ENCODE measurements at regions of chr12 and their contacts with region 1.

Region 1: GRCh38 chr12:6195665-6196535 is 4.3 kb upstream of the CD9 start:
- DNase-seq: peak; percentile 95
- ATAC-seq: peak; percentile 60
- H3K4me3 Mint-ChIP-seq: no peak overlapping the region
- H3K27ac Mint-ChIP-seq: peak overlapping the region; percentile 79
- H3K4me1 Mint-ChIP-seq: peaks cover 63% of the 10 kb centered on the region
- H3K27me3 Mint-ChIP-seq: peaks cover 7% of the 10 kb centered on the region; the same call in 1 of the 2 replicates
- CTCF ChIP-seq: peak; percentile 99

Region 2: GRCh38 chr12:6067152-6067916 is 128.6 kb before region 1 on chr12:
- CTCF ChIA-PET with region 1: interaction called, 27 read pairs
- POLR2A ChIA-PET with region 1: no interaction called
- DNase-seq: peak; percentile 75
- ATAC-seq: peak; percentile 60
- H3K4me3 Mint-ChIP-seq: no peak overlapping the region
- H3K27ac Mint-ChIP-seq: no peak overlapping the region; the same call in 1 of the 2 replicates
- H3K4me1 Mint-ChIP-seq: peaks cover 18% of the 10 kb centered on the region
- H3K27me3 Mint-ChIP-seq: no peaks in the 10 kb centered on the region
- CTCF ChIP-seq: no peak

Region 3: GRCh38 chr12:6222078-6222654 is 26.3 kb after region 1 on chr12:
- CTCF ChIA-PET with region 1: interaction called, 36 read pairs
- POLR2A ChIA-PET with region 1: interaction called, 3 read pairs
- DNase-seq: no peak
- ATAC-seq: no peak
- H3K4me3 Mint-ChIP-seq: no peak overlapping the region
- H3K27ac Mint-ChIP-seq: peak overlapping the region; percentile 78
- H3K4me1 Mint-ChIP-seq: peaks cover 58% of the 10 kb centered on the region
- H3K27me3 Mint-ChIP-seq: no peaks in the 10 kb centered on the region
- CTCF ChIP-seq: no peak

Region 4: GRCh38 chr12:6241495-6241894 is 45.6 kb after region 1 on chr12:
- CTCF ChIA-PET with region 1: interaction called, 10 read pairs
- POLR2A ChIA-PET with region 1: no interaction called
- DNase-seq: no peak
- ATAC-seq: no peak
- H3K4me3 Mint-ChIP-seq: no peak overlapping the region
- H3K27ac Mint-ChIP-seq: peak overlapping the region; percentile 46; the same call in 1 of the 2 replicates
- H3K4me1 Mint-ChIP-seq: no peaks in the 10 kb centered on the region
- H3K27me3 Mint-ChIP-seq: no peaks in the 10 kb centered on the region
- CTCF ChIP-seq: no peak